Body of pancreas (tissue), 4 donors: ENCODE measurements at regions of chr4 and their contacts with region 1.

Region 1: DNA sequence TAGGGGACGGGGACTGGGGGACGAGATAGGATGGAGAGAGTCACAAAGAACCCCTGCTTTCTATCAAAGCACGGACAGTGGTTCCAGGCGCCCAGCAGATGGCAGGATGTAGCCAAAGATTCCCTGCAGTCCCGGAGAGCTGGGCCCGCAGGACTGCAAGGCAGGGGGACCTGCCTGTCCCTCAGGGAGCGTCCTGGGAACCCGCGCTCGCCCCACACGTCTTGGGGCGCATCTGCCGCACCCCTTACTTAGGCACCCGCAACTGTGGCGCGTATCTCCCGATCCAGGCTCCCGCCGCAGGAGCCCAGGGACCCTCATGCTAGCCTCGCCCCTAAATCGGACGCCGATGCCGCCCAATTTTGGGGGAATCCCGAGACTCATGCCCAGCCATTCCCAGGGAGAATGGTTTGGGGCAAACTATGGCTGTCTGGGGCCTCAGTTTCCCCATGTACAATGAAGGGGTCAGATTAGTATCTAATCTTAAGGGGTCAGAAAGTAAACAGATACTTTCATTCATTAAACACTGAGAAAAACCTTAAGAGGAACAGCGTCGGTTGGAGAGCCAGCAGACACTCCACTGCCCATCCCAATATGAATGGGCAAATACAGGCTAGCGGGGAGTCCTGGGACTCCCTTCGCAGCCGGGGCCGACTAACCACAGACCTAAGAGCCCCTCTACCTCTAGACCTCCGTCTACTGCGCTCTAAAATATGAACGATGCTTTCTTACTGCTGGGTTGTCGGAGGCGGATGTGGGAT is 581 bp upstream of the STK32B start:
- DNase-seq: peak; percentile 62 to 76 (median 72)
- ATAC-seq: peak; percentile 75
- H3K4me3 ChIP-seq: peak overlapping the region in 1 of 2 donors; percentile 21
- H3K27ac ChIP-seq: peak overlapping the region in 1 of 4 donors; percentile 41
- H3K4me1 ChIP-seq: peaks cover 16% of the 10 kb centered on the region
- H3K27me3 ChIP-seq: no peaks in the 10 kb centered on the region
- CTCF ChIP-seq: peak; percentile 27 to 74 (median 66)
- POLR2A ChIP-seq: no peak

Region 2: DNA sequence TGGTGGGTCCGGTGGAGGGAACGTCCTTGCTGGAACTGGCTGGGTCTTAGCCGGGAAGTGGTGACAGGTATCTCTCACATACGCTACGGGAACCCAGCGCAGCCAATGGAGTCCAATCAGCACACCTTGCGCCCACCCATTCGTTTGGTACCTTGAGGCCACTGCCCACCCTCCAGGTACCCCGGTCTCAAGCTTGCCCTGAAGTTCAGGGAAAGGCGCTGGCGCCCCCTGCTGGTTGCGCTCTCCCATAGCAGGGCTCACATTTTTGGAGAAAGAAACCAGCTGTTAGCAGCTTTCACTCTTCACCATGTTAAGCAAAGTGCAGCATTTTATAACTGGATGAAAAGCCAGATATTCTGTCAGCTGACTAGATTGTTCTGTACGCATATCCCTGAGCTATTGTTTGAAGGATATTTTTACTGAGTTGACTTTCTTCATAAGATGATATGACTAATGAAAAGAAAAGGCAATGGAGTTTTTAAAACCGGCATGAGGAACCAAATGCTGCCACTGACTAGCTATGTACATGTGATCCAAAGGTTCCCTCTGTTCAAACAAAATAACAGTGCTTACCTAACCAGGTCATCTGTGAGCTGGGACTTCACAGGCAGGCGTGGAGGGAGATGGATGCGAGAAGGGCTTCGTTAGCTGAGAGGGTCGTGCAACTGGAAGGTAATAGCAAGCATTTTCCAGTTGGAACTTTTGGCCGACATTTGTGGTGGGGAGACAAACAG is 867.7 kb before region 1 on chr4:
- intact Hi-C with region 1: no loop called
- DNase-seq: peak in 3 of 4 donors; percentile 6 to 35 (median 28)
- ATAC-seq: no peak
- H3K4me3 ChIP-seq: no peak overlapping the region
- H3K27ac ChIP-seq: no peak overlapping the region
- H3K4me1 ChIP-seq: no peaks in the 10 kb centered on the region
- H3K27me3 ChIP-seq: no peaks in the 10 kb centered on the region
- CTCF ChIP-seq: peak; percentile 30 to 63 (median 52)
- POLR2A ChIP-seq: no peak

Region 3: GRCh38 chr4:5812506-5813229 is 762.0 kb after region 1 on chr4:
- intact Hi-C with region 1: loop called (anchors 10 kb)
- DNase-seq: peak in 2 of 4 donors; percentile 28 to 38
- ATAC-seq: peak; percentile 64
- H3K4me3 ChIP-seq: no peak overlapping the region
- H3K27ac ChIP-seq: no peak overlapping the region
- H3K4me1 ChIP-seq: no peaks in the 10 kb centered on the region
- H3K27me3 ChIP-seq: no peaks in the 10 kb centered on the region
- CTCF ChIP-seq: peak; percentile 51 to 81 (median 70)
- POLR2A ChIP-seq: no peak